Astrocyte of the spinal cord (primary cell): ENCODE measurements at regions of chr5 and their contacts with region 1.

Region 1: DNA sequence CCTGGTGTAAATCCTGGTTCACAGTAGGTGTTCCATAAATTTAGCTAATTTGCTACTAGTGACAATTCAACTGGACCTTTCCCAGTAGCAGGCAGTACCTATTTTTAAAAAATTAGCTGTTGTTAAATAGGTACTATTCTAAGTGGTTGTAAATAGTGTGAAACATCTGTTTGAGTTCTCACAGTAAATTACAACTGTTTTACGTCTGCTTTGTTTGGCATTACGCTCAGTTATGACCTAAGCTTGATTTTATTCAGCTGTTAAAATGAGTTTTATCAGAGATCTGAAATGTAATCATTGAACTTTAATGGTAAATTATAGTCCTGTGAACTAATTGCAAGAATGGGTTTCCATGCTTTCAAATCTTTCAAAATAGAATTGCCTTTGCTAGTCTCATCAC is 93.9 kb downstream of the GPBP1 start:
- DNase-seq: no peak
- H3K4me3 ChIP-seq: no peak overlapping the region
- CTCF ChIP-seq: no peak

Region 2: GRCh38 chr5:56270568-56271392 is 997.0 kb before region 1 on chr5:
- in situ Hi-C with region 1: loop called (anchors 25 kb)
- DNase-seq: peak; percentile 87
- H3K4me3 ChIP-seq: no peak overlapping the region
- CTCF ChIP-seq: peak; percentile 100